Common myeloid progenitor, CD34-positive (primary cell): ENCODE measurements at regions of chr9 and their contacts with region 1.

Region 1: GRCh38 chr9:133238851-133239532 is 29.9 kb upstream of the OBP2B start:
- DNase-seq: peak; percentile 89 to 93 (median 92)
- H3K4me3 ChIP-seq: peak overlapping the region; percentile 17 to 85 (median 56)
- H3K27ac ChIP-seq: peak overlapping the region in 1 of 2 experiments; percentile 70
- H3K4me1 ChIP-seq: peaks cover 2 to 49% (median 21%) of the 10 kb centered on the region in 4 experiments
- H3K27me3 ChIP-seq: no peaks in the 10 kb centered on the region

Region 2: DNA sequence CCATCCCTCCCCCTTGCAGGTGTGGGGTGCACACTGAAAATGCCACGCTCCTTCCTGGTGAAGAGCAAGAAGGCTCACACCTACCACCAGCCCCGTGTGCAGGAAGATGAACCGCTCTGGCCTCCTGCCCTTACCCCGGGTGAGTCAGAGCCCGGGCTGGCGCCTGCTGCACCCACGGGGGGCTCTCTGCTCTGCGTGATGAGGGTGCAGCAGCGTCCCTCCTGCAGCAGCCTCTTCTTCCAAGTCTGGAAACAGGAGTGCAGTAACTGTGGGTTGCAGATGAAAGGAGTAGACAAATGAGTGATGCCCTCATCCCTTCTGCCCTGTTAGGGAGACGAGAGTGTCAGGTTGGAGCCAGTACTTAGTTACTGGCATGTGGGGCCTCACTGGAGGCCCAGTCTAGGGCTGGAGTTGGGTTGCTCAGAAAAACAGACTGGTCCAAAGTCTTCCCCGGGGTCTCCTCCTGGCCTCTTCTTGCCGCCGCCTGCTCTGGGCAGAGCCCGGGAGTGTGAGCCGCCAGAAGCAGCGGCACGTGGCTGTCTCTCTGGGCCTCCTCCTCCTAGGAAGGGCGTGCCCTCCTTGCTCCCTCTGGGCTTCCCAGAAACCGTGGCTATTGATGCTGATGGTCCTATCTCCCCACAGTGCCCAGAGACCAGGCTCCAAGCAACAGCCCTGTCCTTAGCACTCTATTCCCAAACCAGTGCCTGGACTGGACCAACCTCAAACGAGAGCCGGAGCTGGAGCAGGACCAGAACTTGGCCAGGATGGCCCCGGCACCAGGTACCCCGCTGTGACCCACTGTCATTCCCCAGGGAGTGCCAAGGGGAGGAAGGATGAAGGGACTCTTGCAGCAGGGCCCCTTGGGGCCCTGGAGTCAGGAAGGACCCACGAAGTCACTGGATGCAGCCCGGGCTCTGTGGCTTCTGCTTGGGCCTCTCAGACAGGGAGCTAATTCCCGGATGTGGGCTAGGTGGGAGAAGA is 252.1 kb before region 1 on chr9:
- CTCF ChIA-PET with region 1: no interaction called
- POLR2A ChIA-PET with region 1: no interaction called
- DNase-seq: peak in 2 of 3 donors; percentile 52 to 68
- H3K4me3 ChIP-seq: peak overlapping the region in 3 of 7 experiments; percentile 16 to 41 (median 17)
- H3K27ac ChIP-seq: peak overlapping the region in 1 of 2 experiments; percentile 60
- H3K4me1 ChIP-seq: peaks cover 20 to 77% (median 73%) of the 10 kb centered on the region in 4 experiments
- H3K27me3 ChIP-seq: no peaks in the 10 kb centered on the region

Region 3: GRCh38 chr9:133089271-133089671 is 149.7 kb before region 1 on chr9:
- CTCF ChIA-PET with region 1: no interaction called
- POLR2A ChIA-PET with region 1: no interaction called
- DNase-seq: peak in 1 of 3 donors; percentile 21
- H3K4me3 ChIP-seq: no peak overlapping the region
- H3K27ac ChIP-seq: no peak overlapping the region
- H3K4me1 ChIP-seq: peaks cover 0 to 3% (median 0%) of the 10 kb centered on the region in 4 experiments
- H3K27me3 ChIP-seq: no peaks in the 10 kb centered on the region

Region 4: DNA sequence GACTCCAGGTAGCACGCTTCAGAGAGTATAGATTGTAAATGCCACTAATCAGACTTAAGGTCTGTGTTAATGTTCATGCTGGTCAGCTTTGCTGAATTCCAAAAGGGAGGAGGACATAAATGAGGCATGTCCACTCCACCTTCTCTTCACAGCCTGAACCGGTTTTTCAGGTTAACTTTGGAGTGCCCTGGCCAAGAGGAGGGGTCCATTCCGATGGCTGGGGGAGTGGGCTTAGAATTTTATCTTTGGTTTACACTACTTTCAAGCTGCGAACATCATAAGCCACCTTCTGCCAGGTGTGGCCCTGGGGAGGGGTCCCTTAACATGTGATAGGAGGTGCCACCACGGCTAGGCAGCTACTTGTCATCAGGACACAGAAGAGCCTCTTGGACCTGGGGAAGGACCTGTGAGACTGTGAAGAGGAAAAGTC is 11.8 kb after region 1 on chr9:
- CTCF ChIA-PET with region 1: interaction called, 11 read pairs
- POLR2A ChIA-PET with region 1: no interaction called
- DNase-seq: no peak
- H3K4me3 ChIP-seq: no peak overlapping the region
- H3K27ac ChIP-seq: no peak overlapping the region
- H3K4me1 ChIP-seq: peaks cover 0 to 21% (median 9%) of the 10 kb centered on the region in 4 experiments
- H3K27me3 ChIP-seq: peaks cover 0 to 6% (median 0%) of the 10 kb centered on the region in 5 experiments

Region 5: DNA sequence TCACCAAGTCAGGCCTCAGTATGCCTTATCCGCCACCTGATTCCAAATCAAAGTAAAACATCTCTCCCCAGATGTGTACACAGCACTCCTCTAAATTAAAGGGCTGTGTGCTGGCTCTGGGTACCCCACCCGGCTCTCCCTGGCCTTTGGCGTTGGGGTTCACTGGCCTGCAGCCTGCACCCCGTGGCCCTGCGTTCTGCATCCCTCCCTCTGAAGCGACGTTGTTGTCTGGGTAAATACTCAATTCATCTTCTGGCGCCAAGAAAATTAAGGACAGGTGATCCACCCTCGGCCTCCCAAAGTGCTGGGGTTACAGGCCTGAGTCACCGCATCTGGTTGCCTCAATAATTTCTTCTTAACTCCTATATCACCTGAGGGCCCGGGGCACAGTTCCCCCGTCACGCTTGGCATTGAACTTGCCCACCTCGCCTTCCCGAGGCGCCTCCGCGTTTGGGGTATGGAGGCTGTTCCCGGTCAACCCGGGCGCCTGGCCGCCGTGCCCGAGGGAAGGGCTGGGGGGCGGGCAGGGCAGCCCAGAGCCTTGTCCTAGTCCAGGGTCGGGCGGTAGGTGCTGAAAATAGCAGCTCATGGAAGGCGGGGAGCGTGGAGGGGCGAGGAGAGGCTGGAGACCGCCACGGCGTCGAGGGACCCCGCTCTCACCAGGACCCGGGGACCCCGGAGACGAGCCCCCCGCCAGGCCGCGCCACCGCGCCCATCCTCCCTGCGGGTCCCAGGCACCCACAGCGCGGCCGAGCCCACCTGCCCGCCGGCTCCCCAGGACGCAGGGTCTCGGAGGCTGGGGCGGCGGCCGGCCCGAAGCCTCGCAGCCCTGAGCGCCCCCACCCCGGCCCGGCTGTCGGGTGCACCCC is 35.5 kb after region 1 on chr9:
- CTCF ChIA-PET with region 1: interaction called, 13 read pairs
- POLR2A ChIA-PET with region 1: no interaction called
- DNase-seq: peak in 1 of 3 donors; percentile 55
- H3K4me3 ChIP-seq: peak overlapping the region; percentile 44 to 83 (median 64)
- H3K27ac ChIP-seq: peak overlapping the region; percentile 52 to 75
- H3K4me1 ChIP-seq: peaks cover 4 to 55% (median 27%) of the 10 kb centered on the region in 4 experiments
- H3K27me3 ChIP-seq: peaks cover 0 to 5% (median 0%) of the 10 kb centered on the region in 5 experiments

Region 6: DNA sequence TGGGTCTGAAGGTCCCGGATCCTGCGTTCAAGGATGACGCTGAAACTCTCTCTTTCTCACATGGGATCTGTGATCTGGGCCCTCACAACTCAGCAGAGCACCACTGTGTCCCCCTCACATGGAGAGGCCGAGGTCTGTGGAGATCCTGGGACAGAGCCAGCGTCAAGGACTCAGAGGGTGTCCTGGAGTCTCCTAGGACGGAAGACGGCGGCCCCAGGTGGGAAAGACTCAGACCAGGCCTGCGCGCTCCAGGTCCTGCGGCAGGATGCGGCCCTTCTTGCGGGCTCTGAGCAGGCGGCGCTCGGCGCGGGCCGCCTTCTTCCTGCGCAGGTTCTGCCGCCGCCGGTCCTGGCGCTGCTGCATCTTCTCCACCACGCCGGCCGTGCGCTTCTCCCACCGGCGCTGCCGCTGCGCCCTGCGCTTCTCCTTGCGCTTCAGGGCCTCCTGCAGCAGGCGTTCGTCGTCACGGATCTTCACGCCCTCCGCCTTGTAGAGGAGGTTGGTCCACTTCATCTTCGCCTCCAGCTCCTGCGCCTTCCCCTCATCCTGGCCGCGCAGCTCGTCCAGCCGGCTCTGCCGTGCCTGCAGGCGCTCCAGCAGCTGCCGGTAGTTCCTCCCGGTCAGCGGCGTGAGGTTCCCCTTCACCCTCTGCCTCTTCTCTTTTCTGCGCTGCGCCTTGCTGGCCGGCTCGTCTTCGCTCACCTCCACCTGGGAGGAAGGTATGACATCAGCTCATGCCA is 92.8 kb after region 1 on chr9:
- CTCF ChIA-PET with region 1: interaction called, 10 read pairs
- POLR2A ChIA-PET with region 1: interaction called, 3 read pairs
- DNase-seq: no peak
- H3K4me3 ChIP-seq: no peak overlapping the region
- H3K27ac ChIP-seq: no peak overlapping the region
- H3K4me1 ChIP-seq: peaks cover 4 to 19% (median 19%) of the 10 kb centered on the region in 4 experiments
- H3K27me3 ChIP-seq: no peaks in the 10 kb centered on the region

Region 7: DNA sequence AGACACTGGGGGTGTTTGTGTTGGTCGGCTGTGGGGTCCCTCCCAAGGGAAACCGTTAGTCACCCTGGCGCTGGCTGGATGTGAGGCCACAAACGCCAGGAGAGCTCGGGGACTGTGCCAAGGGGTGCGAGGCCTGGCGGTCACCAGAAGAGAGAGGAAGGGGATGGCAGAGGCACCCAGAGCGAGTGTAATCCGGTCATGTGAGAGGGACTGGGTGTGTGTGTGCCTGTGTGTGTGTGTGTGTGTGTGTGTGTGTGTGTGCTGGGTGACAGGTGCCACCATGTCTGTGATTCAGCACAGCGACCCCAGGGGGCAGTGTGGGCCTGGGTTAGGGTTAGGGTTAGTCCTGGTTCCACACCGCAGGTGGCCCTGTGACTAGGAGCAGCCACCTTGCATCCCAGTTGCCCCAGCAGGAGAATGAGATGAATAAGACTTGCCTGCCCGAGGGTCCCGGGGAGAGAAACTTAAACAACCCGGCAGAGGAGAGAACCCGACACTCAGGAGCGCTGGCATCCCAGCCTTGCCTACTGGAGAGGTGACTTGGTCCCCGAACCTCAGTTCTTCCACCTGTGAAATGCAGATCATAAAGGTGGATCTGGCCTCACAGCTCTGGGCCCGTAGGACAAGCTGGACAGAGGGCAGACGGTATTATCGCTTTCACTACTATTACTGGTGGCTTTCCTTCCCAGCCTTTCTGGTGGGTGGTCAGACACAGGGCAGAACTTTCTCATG is 294.1 kb after region 1 on chr9:
- CTCF ChIA-PET with region 1: no interaction called
- POLR2A ChIA-PET with region 1: no interaction called
- DNase-seq: peak; percentile 85 to 91 (median 90)
- H3K4me3 ChIP-seq: no peak overlapping the region
- H3K27ac ChIP-seq: no peak overlapping the region
- H3K4me1 ChIP-seq: peaks cover 0 to 28% (median 23%) of the 10 kb centered on the region in 4 experiments
- H3K27me3 ChIP-seq: peaks cover 0 to 43% (median 11%) of the 10 kb centered on the region in 5 experiments